Right ventricle myocardium inferior (tissue), 1 donor: ENCODE measurements at regions of chr6 and their contacts with region 1.

Region 1: DNA sequence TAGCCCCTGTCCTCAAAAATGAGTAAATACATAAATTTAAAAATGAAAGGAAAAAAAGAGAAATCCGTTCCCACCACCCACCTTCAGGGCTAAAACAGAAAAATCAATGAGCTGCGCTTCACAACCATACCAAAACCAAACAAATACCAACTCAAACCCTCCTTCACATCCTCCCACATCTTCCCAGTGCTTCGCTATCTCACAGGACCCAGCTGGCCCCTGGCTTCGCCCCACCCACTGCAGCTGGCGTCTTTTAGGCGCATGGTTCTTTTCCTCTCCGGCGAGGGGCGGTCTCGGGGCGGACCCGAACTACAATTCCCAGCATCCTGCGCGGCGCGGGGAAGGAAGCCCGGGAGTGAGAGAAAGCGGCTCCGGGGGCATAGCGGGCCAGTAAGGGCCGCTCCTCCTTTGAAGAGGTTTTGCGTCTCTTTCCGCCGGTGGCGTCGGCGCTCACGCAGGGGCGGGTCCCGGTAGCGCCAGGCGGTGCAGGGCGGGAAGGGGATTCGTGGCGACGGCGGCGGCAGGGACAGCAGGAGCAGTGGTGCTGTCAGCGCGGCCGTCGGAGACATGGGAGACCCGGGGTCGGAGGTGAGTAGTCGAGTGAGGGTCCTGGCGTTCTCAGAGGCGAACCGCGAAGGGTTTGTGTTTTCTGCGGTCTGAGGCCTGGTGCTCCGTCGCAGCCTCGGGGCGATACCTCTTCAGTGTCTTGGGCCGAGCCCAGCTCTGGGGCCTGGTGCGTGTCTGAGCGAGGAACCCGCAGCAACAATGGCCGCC is at the start of gene ZNF451:
- DNase-seq: peak; percentile 99
- ATAC-seq: peak; percentile 99
- total RNA-seq, gene ZNF451: 19.0 TPM

Region 2: DNA sequence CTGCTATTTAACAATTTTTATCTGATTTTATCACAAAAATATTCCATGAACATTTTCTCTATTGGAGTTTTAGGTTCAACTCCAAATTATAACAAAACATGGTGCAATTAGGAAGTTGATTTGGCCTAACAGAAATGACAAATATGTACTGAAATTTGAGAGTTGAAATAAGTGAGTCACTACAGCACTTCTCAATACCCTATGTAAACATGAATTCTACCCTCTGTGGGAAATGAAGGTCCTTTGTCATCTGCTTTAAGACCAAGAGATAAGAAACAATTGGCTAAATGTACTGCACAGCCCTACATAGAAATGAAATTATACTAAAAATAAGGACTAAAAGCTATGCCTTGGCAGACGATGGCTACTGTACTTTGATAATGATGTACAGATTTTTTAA is 221.2 kb before region 1 on chr6:
- intact Hi-C with region 1: no loop called
- DNase-seq: no peak
- ATAC-seq: no peak

Region 3: GRCh38 chr6:57048577-57048976 is 41.3 kb before region 1 on chr6:
- intact Hi-C with region 1: loop called (anchors 5 kb)
- DNase-seq: no peak
- ATAC-seq: no peak